Mucosa of descending colon (tissue), 3 donors: ENCODE measurements at regions of chr16 and their contacts with region 1.

Region 1: GRCh38 chr16:52191531-52192134 is 355.3 kb downstream of the TOX3 start:
- DNase-seq: peak in 2 of 3 donors; percentile 68 to 77
- ATAC-seq: peak; percentile 91
- H3K4me3 ChIP-seq: no peak overlapping the region
- H3K4me1 ChIP-seq: no peaks in the 10 kb centered on the region
- CTCF ChIP-seq: peak; percentile 72

Region 2: DNA sequence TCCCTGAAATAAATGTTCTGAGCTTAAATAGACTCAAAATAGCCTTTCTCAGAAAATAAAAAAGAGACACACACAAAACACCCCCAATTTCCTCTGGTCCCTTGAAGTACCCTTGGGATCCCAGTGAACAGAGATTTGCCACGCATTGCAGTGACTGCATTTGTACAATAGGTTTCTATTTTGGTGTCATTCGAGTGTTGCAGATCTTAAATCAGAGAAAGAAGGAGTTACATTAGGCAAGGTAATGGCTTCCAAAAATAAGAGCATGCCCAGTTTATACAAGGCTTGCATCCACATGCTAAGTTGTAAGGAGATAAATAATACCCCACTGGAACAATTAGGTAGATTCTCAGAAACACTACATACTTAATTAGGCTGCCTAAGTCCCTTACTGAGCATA is 353.1 kb after region 1 on chr16:
- intact Hi-C with region 1: loop called in 1 of 2 experiments (anchors 5 kb)
- DNase-seq: no peak
- ATAC-seq: no peak
- H3K4me3 ChIP-seq: peak overlapping the region; percentile 72
- H3K4me1 ChIP-seq: peaks cover 9% of the 10 kb centered on the region
- CTCF ChIP-seq: no peak

Region 3: GRCh38 chr16:52861614-52862022 is 670.0 kb after region 1 on chr16:
- intact Hi-C with region 1: loop called in 1 of 2 experiments (anchors 2 kb)
- DNase-seq: peak in 1 of 3 donors; percentile 57
- ATAC-seq: peak; percentile 53
- H3K4me3 ChIP-seq: no peak overlapping the region
- H3K4me1 ChIP-seq: no peaks in the 10 kb centered on the region
- CTCF ChIP-seq: peak; percentile 10

Region 4: DNA sequence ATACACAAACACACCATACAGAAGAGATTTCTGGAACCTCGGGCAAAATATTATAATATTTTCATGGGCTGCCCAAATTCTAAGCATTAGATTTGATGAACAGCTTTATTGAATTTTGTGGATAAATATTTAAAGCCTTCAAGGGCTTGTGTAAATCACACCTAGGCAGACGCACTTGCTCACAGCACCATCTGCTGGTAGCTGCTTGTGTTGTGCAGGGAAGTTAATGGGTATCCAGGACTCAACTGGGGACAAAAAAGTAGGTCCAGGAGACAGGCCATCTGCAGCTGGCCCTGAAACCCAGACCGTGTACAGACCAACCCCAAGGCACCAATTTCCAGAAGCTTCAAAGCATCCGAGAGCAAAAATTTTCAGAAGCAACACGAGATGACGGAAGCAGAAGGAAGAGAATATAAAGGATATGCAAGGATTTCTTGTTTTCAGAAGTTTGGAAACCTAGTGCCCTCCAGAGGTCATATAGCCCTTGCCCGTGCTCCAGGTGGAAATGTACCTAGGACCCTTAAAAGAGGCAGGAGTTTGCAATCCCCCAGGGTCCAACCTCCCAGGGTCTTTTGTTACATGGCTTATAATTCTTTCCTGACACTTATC is 721.0 kb after region 1 on chr16:
- intact Hi-C with region 1: loop called (anchors 5 kb)
- DNase-seq: peak; percentile 51 to 86 (median 79)
- ATAC-seq: peak; percentile 89
- H3K4me3 ChIP-seq: no peak overlapping the region
- H3K4me1 ChIP-seq: no peaks in the 10 kb centered on the region
- CTCF ChIP-seq: peak; percentile 56

Region 5: GRCh38 chr16:53022374-53022773 is 830.7 kb after region 1 on chr16:
- intact Hi-C with region 1: loop called in 1 of 2 experiments (anchors 10 kb)
- DNase-seq: peak in 1 of 3 donors; percentile 38
- ATAC-seq: peak; percentile 87
- H3K4me3 ChIP-seq: no peak overlapping the region
- H3K4me1 ChIP-seq: no peaks in the 10 kb centered on the region
- CTCF ChIP-seq: no peak